ENCODE measurements at regions of chr10 and their contacts with region 1.

Region 1: DNA sequence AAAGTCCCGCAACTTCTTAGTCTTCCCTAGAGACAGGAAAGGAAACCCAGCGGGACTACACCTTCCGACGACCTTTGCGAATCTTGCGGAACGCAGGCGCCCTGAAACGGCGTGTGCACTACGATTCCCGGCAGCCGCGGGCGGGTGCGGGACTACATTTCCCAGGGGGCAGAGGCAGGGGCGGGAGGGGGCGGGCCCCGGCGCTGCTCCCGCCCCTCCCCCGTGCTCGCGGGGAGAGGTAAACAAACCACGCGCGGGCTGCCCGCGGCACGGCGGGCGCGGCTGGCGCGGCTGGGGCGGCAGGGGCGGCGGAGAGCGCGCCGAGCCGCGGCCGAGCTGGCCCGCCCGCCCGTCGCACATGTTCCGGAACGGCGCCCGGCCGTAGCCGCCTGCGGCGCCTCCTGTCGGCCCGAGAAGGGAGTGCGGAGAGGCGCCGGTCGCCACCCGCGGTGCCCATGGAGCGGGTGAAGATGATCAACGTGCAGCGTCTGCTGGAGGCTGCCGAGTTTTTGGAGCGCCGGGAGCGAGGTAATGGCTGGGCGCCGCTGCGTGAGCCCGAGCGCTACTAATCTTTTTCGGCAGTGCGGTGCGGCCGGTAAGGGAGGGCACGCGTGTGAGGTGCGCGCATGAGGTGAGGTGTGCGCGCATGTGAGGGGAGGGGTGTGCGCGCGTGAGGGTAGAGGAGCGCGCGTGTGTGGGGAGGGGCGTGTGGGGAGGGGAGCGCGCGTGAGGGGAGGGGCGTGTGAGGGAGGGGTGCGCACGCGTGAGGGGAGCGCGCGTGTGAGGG is 18.5 kb downstream of the MXI1 start:
- DNase-seq: peak; percentile 95
- H3K4me3 Mint-ChIP-seq: peak overlapping the region; percentile 99
- H3K27ac Mint-ChIP-seq: peak overlapping the region; percentile 99
- H3K4me1 Mint-ChIP-seq: peaks cover 45% of the 10 kb centered on the region
- H3K27me3 Mint-ChIP-seq: peaks cover 3% of the 10 kb centered on the region

Region 2: GRCh38 chr10:109922976-109923921 is 302.7 kb before region 1 on chr10 and contains the start of gene XPNPEP1:
- intact Hi-C with region 1: loop called (anchors 1 kb)
- DNase-seq: peak; percentile 95
- H3K4me3 Mint-ChIP-seq: peak within 1 kb of the TSS; percentile 95
- H3K27ac Mint-ChIP-seq: peak within 1 kb of the TSS; percentile 93
- H3K4me1 Mint-ChIP-seq: peaks cover 49% of the 10 kb centered on the region
- H3K27me3 Mint-ChIP-seq: peaks cover 4% of the 10 kb centered on the region
- total RNA-seq, gene XPNPEP1: 98.9 and 105 TPM in 2 replicates

Region 3: GRCh38 chr10:110252151-110252550 is 26.2 kb after region 1 on chr10:
- intact Hi-C with region 1: loop called (anchors 2 kb)
- DNase-seq: no peak
- H3K4me3 Mint-ChIP-seq: no peak overlapping the region
- H3K27ac Mint-ChIP-seq: peak overlapping the region; percentile 56
- H3K4me1 Mint-ChIP-seq: peaks cover 34% of the 10 kb centered on the region
- H3K27me3 Mint-ChIP-seq: peaks cover 31% of the 10 kb centered on the region

Region 4: GRCh38 chr10:110497438-110498086 is 271.6 kb after region 1 on chr10 and contains the start of gene DUSP5:
- intact Hi-C with region 1: loop called (anchors 5 kb)
- DNase-seq: peak; percentile 99
- H3K4me3 Mint-ChIP-seq: peak within 1 kb of the TSS; percentile 99
- H3K27ac Mint-ChIP-seq: peak within 1 kb of the TSS; percentile 92
- H3K4me1 Mint-ChIP-seq: peaks cover 47% of the 10 kb centered on the region
- H3K27me3 Mint-ChIP-seq: no peaks in the 10 kb centered on the region
- total RNA-seq, gene DUSP5: 76.0 and 79.9 TPM in 2 replicates

Region 5: DNA sequence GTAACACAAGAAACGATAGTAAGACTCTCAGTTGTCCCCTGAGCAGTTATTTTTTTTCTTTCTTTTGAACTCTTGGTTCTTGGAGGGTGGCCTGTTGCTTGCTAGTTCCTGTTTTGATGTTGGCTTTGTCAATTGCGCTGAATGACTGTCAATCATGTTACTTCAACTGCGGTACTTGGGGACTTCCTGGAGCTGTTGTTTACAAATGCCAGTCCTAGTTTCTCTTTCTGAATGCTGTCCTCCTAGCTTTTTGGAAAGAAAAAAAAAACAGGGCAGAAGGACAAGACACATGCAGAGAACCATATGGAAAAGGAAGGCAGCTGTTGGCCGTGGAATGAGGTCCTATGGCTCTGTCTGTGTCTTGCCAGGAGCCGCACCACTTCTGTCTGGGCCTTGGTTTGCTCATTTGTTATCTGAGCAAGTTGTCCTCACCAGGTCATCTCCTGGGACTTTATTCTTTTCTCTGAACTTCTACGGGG is 638.8 kb after region 1 on chr10:
- intact Hi-C with region 1: loop called (anchors 10 kb)
- DNase-seq: peak; percentile 91
- H3K4me3 Mint-ChIP-seq: peak overlapping the region; percentile 79
- H3K27ac Mint-ChIP-seq: peak overlapping the region; percentile 97
- H3K4me1 Mint-ChIP-seq: peaks cover 82% of the 10 kb centered on the region
- H3K27me3 Mint-ChIP-seq: no peaks in the 10 kb centered on the region

Measured in activated CD4-positive, alpha-beta T cell treated with anti-CD3 and anti-CD28 coated beads, Interleukin-2, amount 10 ng/mL, durations not matched to agents 24 days and 14 days (primary cell).